ENCODE measurements at regions of chr11 and their contacts with region 1.

Region 1: DNA sequence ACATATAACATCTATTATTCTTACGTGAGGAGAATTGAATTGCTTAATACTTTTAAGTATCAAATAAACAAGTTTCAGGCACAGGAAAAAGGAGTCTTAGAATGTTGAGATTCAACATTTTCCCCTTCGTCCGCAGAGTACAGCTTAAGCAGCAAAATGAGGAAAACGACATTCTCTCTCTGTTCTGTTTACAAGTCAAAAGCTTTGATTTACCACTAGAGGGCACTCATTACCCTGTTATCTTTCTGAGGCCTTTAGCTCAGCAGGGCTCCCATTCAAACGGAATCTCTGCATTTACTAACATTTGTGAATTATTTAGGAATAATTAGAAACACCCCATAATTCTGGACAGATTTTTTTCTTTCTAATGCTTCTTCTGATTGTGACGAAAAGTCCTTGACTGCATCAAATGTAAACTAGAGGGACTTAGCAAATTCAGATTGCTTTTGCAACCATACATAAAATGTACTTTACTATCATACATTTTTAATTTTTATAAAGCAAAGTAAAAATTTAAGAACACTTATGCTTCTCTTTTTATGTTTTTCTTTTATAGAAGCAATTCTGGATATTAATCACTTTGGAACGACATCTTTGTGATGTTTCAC is 75.0 kb downstream of the JRKL start:
- DNase-seq: peak; percentile 73 to 78 (median 76)
- ATAC-seq: peak; percentile 98
- H3K4me3 ChIP-seq: no peak overlapping the region
- H3K27ac ChIP-seq: no peak overlapping the region
- H3K4me1 ChIP-seq: peaks cover 0 to 3% of the 10 kb centered on the region in 2 experiments; a peak in 1 of 5 replicates
- H3K27me3 ChIP-seq: no peaks in the 10 kb centered on the region
- CTCF ChIP-seq: peak; percentile 48 to 80 (median 68)
- EP300 ChIP-seq: no peak
- POLR2A ChIP-seq: no peak
- RAD21 ChIP-seq: peak; percentile 89 to 94

Region 2: GRCh38 chr11:96122601-96123074 is 342.2 kb before region 1 on chr11:
- CTCF ChIA-PET with region 1: no interaction called
- POLR2A ChIA-PET with region 1: no interaction called
- in situ Hi-C with region 1: no loop called
- intact Hi-C with region 1: no loop called
- DNase-seq: no peak
- ATAC-seq: no peak
- H3K4me3 ChIP-seq: no peak overlapping the region
- H3K27ac ChIP-seq: no peak overlapping the region
- H3K4me1 ChIP-seq: no peaks in the 10 kb centered on the region
- H3K27me3 ChIP-seq: no peaks in the 10 kb centered on the region
- CTCF ChIP-seq: no peak
- EP300 ChIP-seq: no peak
- POLR2A ChIP-seq: no peak
- RAD21 ChIP-seq: no peak

Region 3: DNA sequence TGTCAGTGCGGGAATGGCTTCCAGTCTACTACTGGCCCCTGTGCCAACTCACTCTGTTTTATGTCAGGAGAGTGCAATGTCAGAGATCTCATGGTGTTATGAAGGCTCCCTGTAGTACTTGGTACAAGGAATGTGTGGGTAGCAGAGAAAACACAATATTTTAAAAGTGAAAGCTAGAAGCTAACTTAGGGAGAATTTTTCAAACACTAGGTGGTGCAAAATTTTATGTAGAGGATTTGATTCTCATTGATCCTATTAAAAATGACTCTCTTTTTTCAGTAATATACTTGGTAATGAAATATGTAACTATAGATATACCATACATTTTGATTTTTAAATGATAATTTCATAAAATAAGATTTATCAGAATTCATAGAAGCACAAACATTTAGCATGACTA is 59.7 kb after region 1 on chr11:
- CTCF ChIA-PET with region 1: no interaction called
- POLR2A ChIA-PET with region 1: no interaction called
- in situ Hi-C with region 1: no loop called
- intact Hi-C with region 1: loop called (anchors 5 kb)
- DNase-seq: no peak
- ATAC-seq: no peak; the same call in 1 of the 3 replicates
- H3K4me3 ChIP-seq: no peak overlapping the region
- H3K27ac ChIP-seq: no peak overlapping the region
- H3K4me1 ChIP-seq: no peaks in the 10 kb centered on the region
- H3K27me3 ChIP-seq: no peaks in the 10 kb centered on the region
- CTCF ChIP-seq: peak in 1 of 3 experiments; percentile 8; a peak in 1 of 6 replicates
- EP300 ChIP-seq: no peak
- POLR2A ChIP-seq: no peak
- RAD21 ChIP-seq: peak in 1 of 2 experiments; percentile 18; a peak in 2 of 4 replicates

Region 4: GRCh38 chr11:96567176-96567575 is 102.4 kb after region 1 on chr11:
- CTCF ChIA-PET with region 1: no interaction called
- POLR2A ChIA-PET with region 1: no interaction called
- in situ Hi-C with region 1: no loop called
- intact Hi-C with region 1: no loop called
- DNase-seq: no peak
- ATAC-seq: no peak
- H3K4me3 ChIP-seq: no peak overlapping the region
- H3K27ac ChIP-seq: no peak overlapping the region
- H3K4me1 ChIP-seq: no peaks in the 10 kb centered on the region
- H3K27me3 ChIP-seq: no peaks in the 10 kb centered on the region
- CTCF ChIP-seq: no peak
- EP300 ChIP-seq: no peak
- POLR2A ChIP-seq: no peak
- RAD21 ChIP-seq: no peak

Region 5: DNA sequence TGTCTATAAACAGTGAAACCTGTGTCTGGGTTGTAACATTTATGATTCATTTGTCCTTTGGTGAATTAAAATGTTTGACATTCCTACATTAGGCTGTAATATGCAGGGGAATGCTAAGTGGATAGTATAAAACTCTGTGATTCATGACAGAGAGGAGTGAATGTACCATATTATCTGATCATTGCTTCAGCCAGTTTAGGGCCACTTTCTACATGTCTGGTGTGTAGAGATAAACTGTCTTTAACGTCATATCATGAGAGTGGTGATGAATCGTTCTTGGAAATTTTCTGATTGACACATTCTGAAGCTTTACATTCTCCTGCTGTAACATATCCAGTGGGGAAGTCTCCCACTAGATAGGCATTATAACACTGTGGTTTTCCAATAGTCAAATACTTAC is 352.7 kb after region 1 on chr11:
- CTCF ChIA-PET with region 1: no interaction called
- POLR2A ChIA-PET with region 1: no interaction called
- in situ Hi-C with region 1: no loop called
- intact Hi-C with region 1: loop called (anchors 5 kb)
- DNase-seq: peak; percentile 9 to 75 (median 36)
- ATAC-seq: peak; percentile 88
- H3K4me3 ChIP-seq: no peak overlapping the region
- H3K27ac ChIP-seq: no peak overlapping the region
- H3K4me1 ChIP-seq: peaks cover 0 to 11% of the 10 kb centered on the region in 2 experiments; a peak in 3 of 5 replicates
- H3K27me3 ChIP-seq: no peaks in the 10 kb centered on the region
- CTCF ChIP-seq: no peak
- EP300 ChIP-seq: peak; percentile 97
- POLR2A ChIP-seq: no peak
- RAD21 ChIP-seq: peak; percentile 11 to 27; a peak in 2 of 4 replicates

Region 6: GRCh38 chr11:96925862-96926261 is 461.1 kb after region 1 on chr11:
- CTCF ChIA-PET with region 1: no interaction called
- POLR2A ChIA-PET with region 1: no interaction called
- in situ Hi-C with region 1: no loop called
- intact Hi-C with region 1: loop called (anchors 10 kb)
- DNase-seq: no peak
- ATAC-seq: no peak
- H3K4me3 ChIP-seq: no peak overlapping the region
- H3K27ac ChIP-seq: no peak overlapping the region
- H3K4me1 ChIP-seq: no peaks in the 10 kb centered on the region
- H3K27me3 ChIP-seq: no peaks in the 10 kb centered on the region
- CTCF ChIP-seq: no peak
- EP300 ChIP-seq: no peak
- POLR2A ChIP-seq: no peak
- RAD21 ChIP-seq: no peak

Region 7: GRCh38 chr11:97140885-97141494 is 676.2 kb after region 1 on chr11:
- CTCF ChIA-PET with region 1: interaction called, 6 read pairs
- POLR2A ChIA-PET with region 1: no interaction called
- in situ Hi-C with region 1: loop called (anchors 10 kb)
- intact Hi-C with region 1: loop called (anchors 1 kb)
- DNase-seq: peak in 3 of 4 experiments; percentile 6 to 26 (median 8)
- ATAC-seq: no peak
- H3K4me3 ChIP-seq: no peak overlapping the region
- H3K27ac ChIP-seq: no peak overlapping the region
- H3K4me1 ChIP-seq: no peaks in the 10 kb centered on the region
- H3K27me3 ChIP-seq: no peaks in the 10 kb centered on the region
- CTCF ChIP-seq: peak; percentile 27 to 54 (median 41); a peak in 5 of 6 replicates
- EP300 ChIP-seq: no peak
- POLR2A ChIP-seq: no peak
- RAD21 ChIP-seq: peak; percentile 63 to 73

Region 8: GRCh38 chr11:97290464-97291041 is 825.7 kb after region 1 on chr11:
- CTCF ChIA-PET with region 1: no interaction called
- POLR2A ChIA-PET with region 1: no interaction called
- in situ Hi-C with region 1: loop called (anchors 25 kb)
- intact Hi-C with region 1: no loop called
- DNase-seq: no peak
- ATAC-seq: no peak
- H3K4me3 ChIP-seq: no peak overlapping the region
- H3K27ac ChIP-seq: no peak overlapping the region
- H3K4me1 ChIP-seq: no peaks in the 10 kb centered on the region
- H3K27me3 ChIP-seq: no peaks in the 10 kb centered on the region
- CTCF ChIP-seq: no peak
- EP300 ChIP-seq: no peak
- POLR2A ChIP-seq: no peak
- RAD21 ChIP-seq: no peak

Measured in K562 (cell line).